ENCODE measurements at regions of chr3 and their contacts with region 1.

Region 1: GRCh38 chr3:51269466-51269865 is 115.6 kb upstream of the MANF start:
- DNase-seq: peak in 1 of 9 experiments; percentile 12
- ATAC-seq: no peak
- H3K4me3 ChIP-seq: no peak overlapping the region
- H3K4me3 Mint-ChIP-seq: no peak overlapping the region
- H3K27ac ChIP-seq: no peak overlapping the region
- H3K27ac Mint-ChIP-seq: peak overlapping the region; percentile 96
- H3K4me1 ChIP-seq: peaks cover 31% of the 10 kb centered on the region
- H3K4me1 Mint-ChIP-seq: peaks cover 55% of the 10 kb centered on the region
- H3K27me3 ChIP-seq: no peaks in the 10 kb centered on the region
- H3K27me3 Mint-ChIP-seq: no peaks in the 10 kb centered on the region
- CTCF ChIP-seq: no peak

Region 2: DNA sequence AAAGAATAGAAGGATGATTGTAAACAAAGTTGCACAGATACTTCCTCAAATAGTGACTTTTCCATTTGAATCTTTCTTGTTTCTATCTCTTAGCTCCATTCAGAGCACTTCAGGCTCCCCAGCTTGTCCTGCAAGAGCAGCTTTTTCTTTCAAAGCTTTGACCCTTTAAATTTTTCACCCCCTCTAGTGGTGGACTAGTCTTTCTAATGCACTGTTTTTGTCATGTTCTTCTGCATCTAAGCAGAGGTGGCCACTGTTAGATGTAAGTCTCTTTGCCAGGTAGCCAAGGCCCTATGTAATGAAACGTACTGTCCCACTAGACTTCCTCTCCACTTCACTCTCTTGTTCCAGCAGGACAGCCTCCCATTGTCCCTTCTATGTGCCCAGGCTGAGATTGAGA is 41.6 kb after region 1 on chr3:
- CTCF ChIA-PET with region 1: no interaction called
- POLR2A ChIA-PET with region 1: no interaction called
- intact Hi-C with region 1: loop called in 1 of 2 experiments (anchors 2 kb)
- DNase-seq: peak in 2 of 9 experiments; percentile 40 to 51
- ATAC-seq: peak; percentile 38
- H3K4me3 ChIP-seq: no peak overlapping the region
- H3K4me3 Mint-ChIP-seq: no peak overlapping the region
- H3K27ac ChIP-seq: no peak overlapping the region
- H3K27ac Mint-ChIP-seq: no peak overlapping the region
- H3K4me1 ChIP-seq: no peaks in the 10 kb centered on the region
- H3K4me1 Mint-ChIP-seq: peaks cover 3% of the 10 kb centered on the region
- H3K27me3 ChIP-seq: no peaks in the 10 kb centered on the region
- H3K27me3 Mint-ChIP-seq: no peaks in the 10 kb centered on the region
- CTCF ChIP-seq: peak; percentile 31

Region 3: GRCh38 chr3:52752045-52752660 is 1482.7 kb after region 1 on chr3:
- CTCF ChIA-PET with region 1: no interaction called
- POLR2A ChIA-PET with region 1: no interaction called
- intact Hi-C with region 1: no loop called
- DNase-seq: no peak
- ATAC-seq: no peak
- H3K4me3 ChIP-seq: no peak overlapping the region
- H3K4me3 Mint-ChIP-seq: no peak overlapping the region
- H3K27ac ChIP-seq: no peak overlapping the region
- H3K27ac Mint-ChIP-seq: peak overlapping the region; percentile 14
- H3K4me1 ChIP-seq: no peaks in the 10 kb centered on the region
- H3K4me1 Mint-ChIP-seq: no peaks in the 10 kb centered on the region
- H3K27me3 ChIP-seq: no peaks in the 10 kb centered on the region
- H3K27me3 Mint-ChIP-seq: no peaks in the 10 kb centered on the region
- CTCF ChIP-seq: no peak